Adrenal gland (tissue), 19 donors: ENCODE measurements at regions of chr2 and their contacts with region 1.

Region 1: GRCh38 chr2:64865073-64865830 is 123.9 kb upstream of the SLC1A4 start:
- DNase-seq: peak; percentile 62 to 85 (median 74)
- H3K4me3 ChIP-seq: peak overlapping the region in 2 of 4 donors; percentile 61 to 68
- H3K27ac ChIP-seq: peak overlapping the region in 4 of 5 donors; percentile 76 to 89 (median 82)
- H3K4me1 ChIP-seq: peaks cover 6 to 7% of the 10 kb centered on the region in 2 donors
- H3K27me3 ChIP-seq: no peaks in the 10 kb centered on the region
- CTCF ChIP-seq: peak in 5 of 6 experiments; percentile 17 to 97 (median 96)
- POLR2A ChIP-seq: peak in 1 of 2 donors; percentile 32

Region 2: GRCh38 chr2:64586883-64587481 is 278.3 kb before region 1 on chr2:
- intact Hi-C with region 1: loop called (anchors 5 kb)
- DNase-seq: no peak
- H3K4me3 ChIP-seq: no peak overlapping the region
- H3K27ac ChIP-seq: no peak overlapping the region
- H3K4me1 ChIP-seq: peaks cover 0 to 10% of the 10 kb centered on the region in 2 donors
- H3K27me3 ChIP-seq: no peaks in the 10 kb centered on the region
- CTCF ChIP-seq: peak; percentile 35 to 81 (median 69)
- POLR2A ChIP-seq: no peak

Region 3: GRCh38 chr2:64622443-64623241 is 242.6 kb before region 1 on chr2:
- intact Hi-C with region 1: no loop called
- DNase-seq: peak in 3 of 7 donors; percentile 22 to 57 (median 27)
- H3K4me3 ChIP-seq: no peak overlapping the region
- H3K27ac ChIP-seq: no peak overlapping the region
- H3K4me1 ChIP-seq: peaks cover 8 to 20% of the 10 kb centered on the region in 2 donors
- H3K27me3 ChIP-seq: no peaks in the 10 kb centered on the region
- CTCF ChIP-seq: peak in 4 of 6 experiments; percentile 24 to 39 (median 30)
- POLR2A ChIP-seq: no peak

Region 4: GRCh38 chr2:64644177-64645004 is 220.9 kb before region 1 on chr2:
- intact Hi-C with region 1: loop called in 1 of 2 experiments (anchors 2 kb)
- DNase-seq: peak; percentile 60 to 90 (median 79)
- H3K4me3 ChIP-seq: peak overlapping the region in 2 of 4 donors; percentile 23 to 59
- H3K27ac ChIP-seq: peak overlapping the region; percentile 69 to 94 (median 93)
- H3K4me1 ChIP-seq: peaks cover 33 to 83% of the 10 kb centered on the region in 2 donors
- H3K27me3 ChIP-seq: no peaks in the 10 kb centered on the region
- CTCF ChIP-seq: no peak
- POLR2A ChIP-seq: peak; percentile 68 to 78

Region 5: GRCh38 chr2:64730551-64731262 is 134.5 kb before region 1 on chr2:
- intact Hi-C with region 1: no loop called
- DNase-seq: peak; percentile 61 to 85 (median 77)
- H3K4me3 ChIP-seq: peak overlapping the region in 3 of 4 donors; percentile 15 to 62 (median 39)
- H3K27ac ChIP-seq: peak overlapping the region; percentile 35 to 88 (median 75)
- H3K4me1 ChIP-seq: peaks cover 0 to 24% of the 10 kb centered on the region in 2 donors
- H3K27me3 ChIP-seq: no peaks in the 10 kb centered on the region
- CTCF ChIP-seq: no peak
- POLR2A ChIP-seq: peak in 1 of 2 donors; percentile 50

Region 6: GRCh38 chr2:64750817-64751285 is 114.4 kb before region 1 on chr2:
- intact Hi-C with region 1: loop called in 1 of 2 experiments (anchors 5 kb)
- DNase-seq: peak in 4 of 7 donors; percentile 99 to 100 (median 100)
- H3K4me3 ChIP-seq: peak overlapping the region; percentile 65 to 96 (median 72)
- H3K27ac ChIP-seq: peak overlapping the region; percentile 93 to 97 (median 97)
- H3K4me1 ChIP-seq: peaks cover 7 to 35% of the 10 kb centered on the region in 2 donors
- H3K27me3 ChIP-seq: no peaks in the 10 kb centered on the region
- CTCF ChIP-seq: peak in 1 of 6 experiments; percentile 31
- POLR2A ChIP-seq: peak; percentile 98 to 100

Region 7: DNA sequence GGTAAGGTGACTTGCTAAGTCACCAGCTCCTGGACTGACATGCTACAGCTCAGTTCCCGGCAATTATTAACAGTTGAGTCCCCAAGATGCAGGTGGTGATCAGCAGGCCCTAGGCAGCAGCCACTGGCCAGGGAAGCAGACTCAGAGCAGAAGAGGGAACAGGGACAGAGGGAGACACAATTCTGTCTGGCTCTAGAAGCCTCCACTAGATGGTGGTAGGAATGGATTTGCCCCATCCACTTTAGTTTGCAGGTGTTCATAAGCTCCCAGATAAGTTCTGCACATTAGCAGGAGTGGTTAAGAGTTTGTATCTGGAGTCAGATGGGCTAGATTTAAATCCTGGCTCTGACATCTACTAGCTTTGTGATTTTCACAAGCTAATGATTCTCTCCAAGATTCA is 98.5 kb after region 1 on chr2:
- intact Hi-C with region 1: no loop called
- DNase-seq: no peak
- H3K4me3 ChIP-seq: no peak overlapping the region
- H3K27ac ChIP-seq: no peak overlapping the region
- H3K4me1 ChIP-seq: peaks cover 0 to 7% of the 10 kb centered on the region in 2 donors
- H3K27me3 ChIP-seq: no peaks in the 10 kb centered on the region
- CTCF ChIP-seq: no peak
- POLR2A ChIP-seq: no peak